Dendritic cell treated with granulocyte-macrophage colony-stimulating factor and Interleukin-4, amounts not matched to agents 40 ng/mL and 50 ng/mL, for 4 days (primary cell): ENCODE measurements at regions of chr19 and their contacts with region 1.

Region 1: GRCh38 chr19:48290771-48291488 is 21.0 kb downstream of the ZNF114 start:
- H3K4me3 Mint-ChIP-seq: peak overlapping the region; percentile 69
- H3K27ac Mint-ChIP-seq: no peak overlapping the region
- H3K4me1 Mint-ChIP-seq: peaks cover 9% of the 10 kb centered on the region
- H3K27me3 Mint-ChIP-seq: peaks cover 13% of the 10 kb centered on the region

Region 2: DNA sequence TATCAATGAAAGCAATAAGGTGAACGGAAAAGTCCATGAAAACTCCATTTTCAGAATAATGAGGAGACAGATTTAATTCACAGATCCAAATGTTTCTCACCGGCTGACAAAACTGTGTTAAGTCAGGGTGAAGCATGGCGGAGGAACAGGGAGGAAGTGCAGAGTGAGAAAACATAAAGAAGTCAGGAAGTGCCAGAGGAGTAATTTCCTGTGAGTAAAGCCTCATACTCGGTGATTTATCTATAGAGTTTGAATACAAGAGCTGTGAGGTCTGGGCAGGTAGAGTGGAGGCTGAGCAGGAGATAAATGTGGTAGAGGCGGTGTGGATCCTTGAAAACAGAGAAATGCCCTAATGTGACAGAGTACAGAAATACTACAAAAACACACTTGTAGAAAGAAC is 46.6 kb before region 1 on chr19:
- intact Hi-C with region 1: no loop called
- H3K4me3 Mint-ChIP-seq: peak overlapping the region; percentile 32
- H3K27ac Mint-ChIP-seq: peak overlapping the region; percentile 77
- H3K4me1 Mint-ChIP-seq: peaks cover 39% of the 10 kb centered on the region
- H3K27me3 Mint-ChIP-seq: no peaks in the 10 kb centered on the region

Region 3: DNA sequence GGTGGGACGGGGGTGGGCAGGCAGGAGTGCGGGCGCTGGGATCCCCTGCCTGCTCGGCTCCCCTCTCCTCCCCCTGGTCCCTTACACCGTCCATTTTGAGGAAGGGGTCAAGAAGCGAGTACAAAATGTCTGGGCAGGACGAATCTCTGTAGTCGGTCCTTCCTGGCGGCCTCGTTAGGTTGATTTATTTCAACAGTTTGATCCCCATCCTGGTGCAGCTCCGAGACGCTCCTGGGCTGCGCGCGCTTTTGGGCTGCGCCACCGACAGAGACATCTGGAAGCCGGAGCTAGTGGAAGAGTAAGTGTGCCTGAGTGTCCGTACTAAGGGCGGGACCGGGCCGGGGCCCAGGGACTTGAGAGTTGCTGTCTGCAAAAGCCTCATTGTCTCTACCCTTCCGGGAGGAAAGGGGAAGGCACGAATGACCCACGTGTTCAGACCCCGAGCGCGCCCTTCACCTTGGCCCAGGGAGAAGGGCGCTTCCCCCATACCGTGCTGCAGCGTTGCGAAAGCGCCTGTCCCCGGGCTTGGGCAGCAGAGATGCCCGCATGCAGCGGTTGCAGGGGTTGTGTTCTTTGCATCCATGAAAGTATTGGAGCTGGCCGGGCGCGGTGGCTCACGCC is 19.3 kb before region 1 on chr19:
- intact Hi-C with region 1: loop called (anchors 1 kb)
- H3K4me3 Mint-ChIP-seq: peak overlapping the region; percentile 83
- H3K27ac Mint-ChIP-seq: no peak overlapping the region
- H3K4me1 Mint-ChIP-seq: peaks cover 30% of the 10 kb centered on the region
- H3K27me3 Mint-ChIP-seq: peaks cover 31% of the 10 kb centered on the region